PC-3 (cell line): ENCODE measurements at regions of chr4 and their contacts with region 1.

Region 1: DNA sequence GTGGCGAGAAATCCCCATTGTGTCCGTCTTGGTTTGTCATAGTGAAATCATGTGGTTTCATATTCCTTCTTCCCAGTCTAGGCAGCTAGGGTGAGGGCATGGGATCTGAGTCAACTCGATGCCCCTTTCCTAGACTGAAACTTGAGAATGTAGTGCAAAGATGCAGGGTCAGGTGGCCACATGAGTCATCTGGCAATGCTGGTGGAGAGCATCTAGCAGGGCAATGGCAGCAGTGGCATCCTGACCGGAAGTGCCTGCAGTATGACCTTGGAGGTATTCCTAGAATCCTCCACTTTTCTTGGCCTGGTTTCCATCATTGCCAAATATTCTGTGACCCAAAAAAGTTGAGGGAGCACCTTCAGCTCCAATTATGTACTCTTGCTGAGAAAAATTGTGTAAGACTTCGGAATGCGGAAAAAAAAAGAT is 39.1 kb upstream of the TMEM184C start:
- DNase-seq: peak; percentile 96
- ATAC-seq: peak; percentile 93
- H3K4me3 ChIP-seq: no peak overlapping the region
- H3K27ac ChIP-seq: peak overlapping the region; percentile 91
- H3K4me1 ChIP-seq: peaks cover 47% of the 10 kb centered on the region
- H3K27me3 ChIP-seq: no peaks in the 10 kb centered on the region
- CTCF ChIP-seq: no peak

Region 2: DNA sequence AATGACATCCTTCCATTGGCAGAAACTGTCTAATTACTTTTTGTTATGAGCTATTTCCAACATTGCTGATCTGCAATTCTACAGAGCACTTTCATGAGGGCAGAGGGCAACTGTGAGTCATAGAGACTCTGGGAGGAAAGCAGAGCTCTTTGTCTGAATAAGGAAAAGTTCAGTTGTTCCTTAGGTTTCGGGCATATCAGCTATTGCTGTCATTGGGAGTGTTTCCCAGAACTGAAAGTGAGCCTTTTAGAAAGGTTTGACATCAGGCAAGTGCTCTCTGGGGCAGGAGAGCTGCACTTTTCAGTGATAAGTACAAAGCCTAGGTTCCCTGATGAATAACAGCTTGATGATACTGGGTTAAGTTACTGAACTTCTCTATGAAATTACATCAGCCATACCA is 216.3 kb before region 1 on chr4:
- CTCF ChIA-PET with region 1: no interaction called
- POLR2A ChIA-PET with region 1: no interaction called
- intact Hi-C with region 1: loop called (anchors 5 kb)
- DNase-seq: peak; percentile 76
- ATAC-seq: peak; percentile 79
- H3K4me3 ChIP-seq: no peak overlapping the region
- H3K27ac ChIP-seq: peak overlapping the region; percentile 82
- H3K4me1 ChIP-seq: peaks cover 44% of the 10 kb centered on the region
- H3K27me3 ChIP-seq: no peaks in the 10 kb centered on the region
- CTCF ChIP-seq: no peak

Region 3: GRCh38 chr4:147542229-147542990 is 35.7 kb before region 1 on chr4:
- CTCF ChIA-PET with region 1: no interaction called
- POLR2A ChIA-PET with region 1: no interaction called
- intact Hi-C with region 1: loop called (anchors 2 kb)
- DNase-seq: peak; percentile 17
- ATAC-seq: no peak
- H3K4me3 ChIP-seq: no peak overlapping the region
- H3K27ac ChIP-seq: peak overlapping the region; percentile 82
- H3K4me1 ChIP-seq: peaks cover 43% of the 10 kb centered on the region
- H3K27me3 ChIP-seq: no peaks in the 10 kb centered on the region
- CTCF ChIP-seq: no peak